AG04450 (cell line): ENCODE measurements at regions of chr18 and their contacts with region 1.

Region 1: DNA sequence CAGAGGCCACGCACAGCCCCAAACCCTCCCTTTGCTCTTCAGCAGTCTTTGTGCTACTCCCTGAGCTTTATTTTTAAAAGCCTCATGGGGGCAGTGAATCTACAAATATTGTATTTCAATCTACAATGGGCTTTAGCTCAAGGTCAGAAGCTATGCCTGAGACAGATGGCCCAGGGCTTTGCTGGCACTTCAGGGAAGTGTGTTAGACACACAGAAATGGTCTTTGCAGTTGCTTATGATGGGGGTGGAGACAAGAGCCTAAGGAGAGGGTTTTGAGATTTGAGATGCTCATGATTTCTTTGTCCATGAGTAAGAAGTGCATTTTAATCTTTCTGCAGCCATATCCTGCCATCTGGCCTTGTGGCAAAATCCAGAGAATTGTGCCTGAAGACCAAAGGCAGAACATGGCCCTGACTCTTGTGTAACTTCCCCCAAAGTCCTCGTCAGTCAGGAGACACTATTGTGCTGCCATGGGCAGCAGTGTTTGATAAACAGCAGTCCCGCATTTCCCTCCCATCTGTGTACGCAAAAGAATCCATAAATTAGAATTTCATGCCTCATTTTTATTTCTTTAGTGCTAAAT is 92.6 kb downstream of the VAPA start:
- DNase-seq: peak; percentile 6
- H3K4me3 ChIP-seq: no peak overlapping the region
- H3K27ac ChIP-seq: no peak overlapping the region
- H3K27me3 ChIP-seq: peaks cover 5% of the 10 kb centered on the region
- CTCF ChIP-seq: peak; percentile 26

Region 2: GRCh38 chr18:10032331-10033015 is 26.1 kb after region 1 on chr18:
- CTCF ChIA-PET with region 1: no interaction called
- POLR2A ChIA-PET with region 1: no interaction called
- DNase-seq: no peak
- H3K4me3 ChIP-seq: no peak overlapping the region
- H3K27ac ChIP-seq: no peak overlapping the region
- H3K27me3 ChIP-seq: peaks cover 22% of the 10 kb centered on the region
- CTCF ChIP-seq: peak; percentile 27; the same call in 1 of the 2 replicates

Region 3: DNA sequence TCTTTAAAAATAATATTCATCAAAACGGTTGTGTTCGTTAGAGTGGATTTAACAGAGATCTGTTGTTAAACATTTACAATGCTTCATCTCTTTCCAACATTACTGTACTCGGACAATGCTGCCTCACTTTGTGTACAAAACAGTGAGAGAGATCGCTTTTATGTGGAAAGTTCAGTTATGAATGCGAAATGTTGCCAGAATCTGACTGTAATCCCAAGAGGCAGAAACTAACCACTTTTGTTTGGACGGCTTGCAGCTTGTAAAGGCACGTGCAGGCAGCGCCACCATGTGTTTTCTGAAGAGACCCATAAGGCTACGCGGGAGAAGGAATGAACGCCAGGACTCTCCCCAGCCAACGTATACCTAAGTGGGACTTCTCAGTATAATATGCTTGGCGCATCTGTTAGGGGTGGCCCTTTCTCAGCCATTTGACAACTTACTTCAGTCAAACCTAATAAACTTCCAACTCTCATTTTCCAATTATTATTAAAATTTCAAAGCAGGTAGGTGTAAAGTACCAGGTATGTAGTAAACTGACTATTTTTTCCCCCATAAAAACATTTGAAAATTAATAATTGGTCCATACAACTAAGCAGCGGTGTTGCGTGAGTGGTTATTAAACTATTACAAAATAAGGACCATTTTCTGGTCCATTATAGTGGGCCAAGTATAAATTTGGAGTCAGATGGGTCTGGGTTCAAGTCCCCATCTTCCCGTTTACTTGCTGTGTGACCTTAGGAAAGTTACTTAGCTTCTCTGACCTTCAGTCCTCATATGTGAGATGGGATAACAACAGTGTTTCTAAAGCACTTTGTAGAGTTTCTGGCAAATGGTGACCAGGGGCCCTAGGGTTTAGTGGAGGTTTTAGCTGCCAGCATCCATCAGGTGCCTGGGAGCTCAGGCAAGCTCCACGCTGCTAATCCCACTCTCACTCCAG is 513.9 kb after region 1 on chr18:
- CTCF ChIA-PET with region 1: interaction called, 30 read pairs
- POLR2A ChIA-PET with region 1: no interaction called
- DNase-seq: peak; percentile 77
- H3K4me3 ChIP-seq: no peak overlapping the region
- H3K27ac ChIP-seq: no peak overlapping the region
- H3K27me3 ChIP-seq: peaks cover 30% of the 10 kb centered on the region
- CTCF ChIP-seq: peak; percentile 89